ENCODE measurements at regions of chr11 and their contacts with region 1.

Region 1: DNA sequence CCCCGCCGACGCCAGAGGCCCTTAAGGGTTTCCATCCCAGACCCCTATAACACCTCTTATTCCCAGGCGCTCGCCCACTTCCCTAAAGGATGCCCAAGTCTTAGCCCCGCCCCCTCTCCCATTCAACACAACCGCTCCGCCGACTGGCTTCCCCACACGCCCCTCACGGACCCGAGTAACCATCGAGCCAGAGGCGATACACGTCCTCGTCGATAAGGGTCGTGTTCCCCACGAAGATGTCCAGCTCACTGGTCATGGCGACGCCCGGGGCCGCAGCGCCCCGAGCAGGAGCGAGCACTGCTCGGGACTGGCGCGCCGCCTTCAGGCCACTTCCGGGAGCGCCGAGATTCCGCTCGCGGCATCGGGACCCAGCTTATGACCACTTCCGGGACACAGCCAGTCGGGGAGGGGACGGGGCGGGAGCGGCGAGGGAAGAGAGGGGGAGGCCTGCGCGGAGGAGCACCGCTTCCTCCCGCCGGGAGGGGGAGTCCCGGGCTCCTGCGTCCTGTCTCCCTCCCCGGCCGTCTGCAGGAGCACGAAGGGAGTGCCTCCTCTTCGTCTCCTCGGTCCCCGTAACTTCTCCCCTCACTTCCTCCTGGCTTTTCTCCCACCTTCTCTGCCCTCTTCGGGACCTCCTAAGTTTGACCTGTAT is at the start of gene FIBP:
- DNase-seq: peak; percentile 92 to 98 (median 95)
- ATAC-seq: peak; percentile 60
- H3K4me3 ChIP-seq: peak within 1 kb of the TSS; percentile 93
- H3K4me3 Mint-ChIP-seq: peak within 1 kb of the TSS; percentile 87
- H3K27ac ChIP-seq: peak within 1 kb of the TSS; percentile 88 to 91
- H3K27ac Mint-ChIP-seq: peak within 1 kb of the TSS; percentile 95
- H3K4me1 ChIP-seq: peaks cover 68% of the 10 kb centered on the region
- H3K4me1 Mint-ChIP-seq: peaks cover 63% of the 10 kb centered on the region
- H3K27me3 ChIP-seq: no peaks in the 10 kb centered on the region
- H3K27me3 Mint-ChIP-seq: no peaks in the 10 kb centered on the region
- CTCF ChIP-seq: peak; percentile 95
- total RNA-seq, gene FIBP: 19.1 to 19.9 TPM

Region 2: DNA sequence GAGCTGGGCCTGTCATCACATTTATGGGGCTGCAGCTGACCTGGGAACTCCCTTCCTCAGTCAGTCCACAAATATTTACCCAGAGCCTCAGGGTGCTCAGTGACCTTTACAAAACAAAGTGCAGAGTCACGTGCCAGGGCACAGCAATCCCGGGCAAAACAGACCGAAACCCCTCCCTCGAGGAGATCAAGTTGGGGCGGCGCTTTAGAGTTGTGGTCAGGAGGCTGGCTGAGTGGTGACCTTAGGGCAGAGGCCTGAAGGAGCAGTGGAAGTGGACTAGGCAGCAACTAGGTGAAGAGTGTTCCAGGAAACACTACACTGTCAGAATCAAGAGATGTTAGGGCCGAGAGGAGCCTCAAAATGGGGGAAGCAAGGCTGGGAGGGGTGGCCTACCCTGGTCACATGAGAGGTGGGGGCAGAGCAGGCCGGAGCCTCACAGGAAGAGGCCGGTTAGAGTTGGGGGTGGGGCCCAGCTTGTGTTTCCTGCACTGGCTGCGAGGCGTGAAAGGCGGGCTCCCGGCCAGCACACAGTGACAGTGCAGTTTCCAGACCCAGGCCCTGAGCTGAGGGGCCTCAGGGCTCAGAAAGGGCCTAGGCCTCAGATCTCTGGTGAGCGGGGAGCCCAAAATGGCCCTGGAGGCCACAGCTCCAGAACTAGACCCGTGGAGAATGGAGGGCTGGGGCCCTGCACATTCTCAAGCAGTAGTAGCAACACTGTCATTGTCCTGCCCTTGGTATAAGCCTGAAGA is 469.4 kb before region 1 on chr11:
- CTCF ChIA-PET with region 1: no interaction called
- POLR2A ChIA-PET with region 1: interaction called, 10 read pairs
- intact Hi-C with region 1: no loop called
- DNase-seq: peak in 12 of 14 experiments; percentile 56 to 94 (median 75)
- ATAC-seq: peak; percentile 2
- H3K4me3 ChIP-seq: peak overlapping the region; percentile 86
- H3K4me3 Mint-ChIP-seq: peak overlapping the region; percentile 92
- H3K27ac ChIP-seq: peak overlapping the region; percentile 99
- H3K27ac Mint-ChIP-seq: peak overlapping the region; percentile 96
- H3K4me1 ChIP-seq: peaks cover 74% of the 10 kb centered on the region
- H3K4me1 Mint-ChIP-seq: peaks cover 57% of the 10 kb centered on the region
- H3K27me3 ChIP-seq: no peaks in the 10 kb centered on the region
- H3K27me3 Mint-ChIP-seq: no peaks in the 10 kb centered on the region
- CTCF ChIP-seq: no peak

Region 3: GRCh38 chr11:65471410-65471762 is 416.9 kb before region 1 on chr11:
- CTCF ChIA-PET with region 1: no interaction called
- POLR2A ChIA-PET with region 1: no interaction called
- intact Hi-C with region 1: no loop called
- DNase-seq: peak in 5 of 14 experiments; percentile 15 to 64 (median 32)
- ATAC-seq: no peak
- H3K4me3 ChIP-seq: peak overlapping the region; percentile 3
- H3K4me3 Mint-ChIP-seq: no peak overlapping the region
- H3K27ac ChIP-seq: peak overlapping the region; percentile 72 to 76
- H3K27ac Mint-ChIP-seq: peak overlapping the region; percentile 92
- H3K4me1 ChIP-seq: peaks cover 26% of the 10 kb centered on the region
- H3K4me1 Mint-ChIP-seq: peaks cover 16% of the 10 kb centered on the region
- H3K27me3 ChIP-seq: no peaks in the 10 kb centered on the region
- H3K27me3 Mint-ChIP-seq: no peaks in the 10 kb centered on the region
- CTCF ChIP-seq: no peak

Region 4: DNA sequence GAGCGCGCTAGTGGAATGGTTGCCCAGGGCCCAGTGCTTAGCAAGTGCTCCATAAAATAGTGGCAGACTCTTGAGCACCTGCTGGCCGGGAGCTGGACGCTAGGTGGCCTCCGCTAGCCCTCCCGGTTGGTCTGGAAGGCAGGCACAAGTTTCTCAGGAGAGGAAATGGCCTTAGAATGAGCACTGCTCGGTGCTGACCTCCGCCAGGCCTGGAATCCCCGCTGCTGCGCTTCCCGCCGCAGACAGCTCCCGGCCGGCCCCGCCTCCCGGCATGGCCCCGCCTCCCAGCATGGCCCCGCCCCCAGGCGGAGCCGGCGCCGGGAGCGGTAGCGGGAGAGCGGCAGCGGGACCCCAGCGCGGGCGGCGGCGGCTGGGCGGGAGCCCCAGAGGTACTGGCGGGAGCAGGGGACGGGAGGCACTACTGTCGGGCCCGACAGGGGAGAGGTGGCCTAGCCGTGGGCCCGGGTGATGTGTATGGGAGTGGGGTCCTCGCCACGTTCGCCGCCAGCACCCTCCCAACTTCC is 250.4 kb before region 1 on chr11 and contains the start of gene SIPA1:
- CTCF ChIA-PET with region 1: no interaction called
- POLR2A ChIA-PET with region 1: no interaction called
- intact Hi-C with region 1: no loop called
- DNase-seq: peak; percentile 50 to 90 (median 68)
- ATAC-seq: peak; percentile 43
- H3K4me3 ChIP-seq: peak within 1 kb of the TSS; percentile 100
- H3K4me3 Mint-ChIP-seq: peak within 1 kb of the TSS; percentile 97
- H3K27ac ChIP-seq: peak within 1 kb of the TSS; percentile 92 to 95
- H3K27ac Mint-ChIP-seq: peak within 1 kb of the TSS; percentile 100
- H3K4me1 ChIP-seq: peaks cover 74% of the 10 kb centered on the region
- H3K4me1 Mint-ChIP-seq: peaks cover 60% of the 10 kb centered on the region
- H3K27me3 ChIP-seq: no peaks in the 10 kb centered on the region
- H3K27me3 Mint-ChIP-seq: no peaks in the 10 kb centered on the region
- CTCF ChIP-seq: no peak
- total RNA-seq, gene SIPA1: 272 to 298 TPM

Region 5: GRCh38 chr11:65779851-65780577 is 108.3 kb before region 1 on chr11:
- CTCF ChIA-PET with region 1: interaction called, 18 read pairs
- POLR2A ChIA-PET with region 1: interaction called, 17 read pairs
- intact Hi-C with region 1: no loop called
- DNase-seq: peak; percentile 57 to 89 (median 72)
- ATAC-seq: peak; percentile 73
- H3K4me3 ChIP-seq: peak overlapping the region; percentile 92
- H3K4me3 Mint-ChIP-seq: peak overlapping the region; percentile 88
- H3K27ac ChIP-seq: peak overlapping the region in 1 of 2 donors; percentile 17
- H3K27ac Mint-ChIP-seq: peak overlapping the region; percentile 56
- H3K4me1 ChIP-seq: peaks cover 46% of the 10 kb centered on the region
- H3K4me1 Mint-ChIP-seq: peaks cover 17% of the 10 kb centered on the region
- H3K27me3 ChIP-seq: no peaks in the 10 kb centered on the region
- H3K27me3 Mint-ChIP-seq: peaks cover 12% of the 10 kb centered on the region
- CTCF ChIP-seq: peak; percentile 93

Region 6: DNA sequence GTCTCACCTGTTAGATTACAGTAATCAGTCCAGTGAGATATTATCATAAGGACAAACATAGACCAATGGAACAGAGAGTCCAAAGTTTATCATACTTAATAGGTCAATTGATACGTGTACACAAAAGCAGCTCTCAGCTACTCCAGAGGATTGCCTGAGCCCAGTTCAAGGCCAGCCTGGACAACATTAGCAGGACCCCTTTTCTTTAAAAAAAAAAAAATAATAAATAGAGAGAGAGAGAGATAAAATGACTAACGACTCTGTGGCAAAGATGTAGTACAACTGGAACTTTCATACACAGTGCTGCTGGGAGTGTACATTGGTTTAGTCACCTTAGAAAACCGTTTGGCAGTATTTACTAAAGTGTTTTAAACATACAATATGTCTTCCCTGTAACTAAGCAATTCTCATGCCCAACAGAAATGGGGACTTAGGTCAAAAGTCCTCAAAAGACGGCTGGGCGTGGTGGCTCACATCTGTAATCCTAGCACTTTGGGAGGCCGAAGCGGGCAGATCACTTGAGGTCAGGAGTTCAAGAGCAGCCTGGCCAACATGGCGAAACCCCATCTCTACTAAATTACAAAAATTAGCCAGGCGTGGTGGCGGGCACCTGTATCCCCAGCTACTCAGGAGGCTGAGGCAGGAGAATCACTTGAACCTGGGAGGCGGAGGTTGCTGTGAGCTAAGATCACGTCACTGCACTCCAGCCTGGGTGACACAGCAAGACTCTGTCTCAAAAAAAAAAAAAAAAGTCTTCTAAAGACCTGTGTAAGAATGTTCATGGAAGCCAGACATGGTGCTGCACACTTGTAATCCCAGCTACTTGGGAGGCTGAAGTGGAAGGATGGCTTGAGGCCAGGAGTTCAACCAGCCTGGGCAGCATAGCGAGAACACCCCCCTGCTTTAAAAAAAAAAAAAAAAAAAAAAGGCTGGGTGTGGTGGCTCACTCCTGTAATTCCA is 43.8 kb before region 1 on chr11:
- CTCF ChIA-PET with region 1: no interaction called
- POLR2A ChIA-PET with region 1: no interaction called
- intact Hi-C with region 1: no loop called
- DNase-seq: no peak
- ATAC-seq: no peak
- H3K4me3 ChIP-seq: no peak overlapping the region
- H3K4me3 Mint-ChIP-seq: no peak overlapping the region
- H3K27ac ChIP-seq: no peak overlapping the region
- H3K27ac Mint-ChIP-seq: no peak overlapping the region
- H3K4me1 ChIP-seq: no peaks in the 10 kb centered on the region
- H3K4me1 Mint-ChIP-seq: no peaks in the 10 kb centered on the region
- H3K27me3 ChIP-seq: no peaks in the 10 kb centered on the region
- H3K27me3 Mint-ChIP-seq: no peaks in the 10 kb centered on the region
- CTCF ChIP-seq: no peak

Region 7: GRCh38 chr11:65900125-65900898 is 12.0 kb after region 1 on chr11 and contains the start of gene FOSL1:
- CTCF ChIA-PET with region 1: interaction called, 37 read pairs
- POLR2A ChIA-PET with region 1: interaction called, 80 read pairs
- intact Hi-C with region 1: loop called (anchors 1 kb)
- DNase-seq: peak; percentile 81 to 98 (median 90)
- ATAC-seq: peak; percentile 94
- H3K4me3 ChIP-seq: peak within 1 kb of the TSS; percentile 43
- H3K4me3 Mint-ChIP-seq: peak within 1 kb of the TSS; percentile 72
- H3K27ac ChIP-seq: no peak within 1 kb of the TSS
- H3K27ac Mint-ChIP-seq: peak within 1 kb of the TSS; percentile 79
- H3K4me1 ChIP-seq: peaks cover 27% of the 10 kb centered on the region
- H3K4me1 Mint-ChIP-seq: peaks cover 5% of the 10 kb centered on the region
- H3K27me3 ChIP-seq: peaks cover 9 to 12% of the 10 kb centered on the region in 2 experiments
- H3K27me3 Mint-ChIP-seq: peaks cover 18% of the 10 kb centered on the region
- CTCF ChIP-seq: no peak
- total RNA-seq, gene FOSL1: 1.8 to 2.2 TPM

Region 8: DNA sequence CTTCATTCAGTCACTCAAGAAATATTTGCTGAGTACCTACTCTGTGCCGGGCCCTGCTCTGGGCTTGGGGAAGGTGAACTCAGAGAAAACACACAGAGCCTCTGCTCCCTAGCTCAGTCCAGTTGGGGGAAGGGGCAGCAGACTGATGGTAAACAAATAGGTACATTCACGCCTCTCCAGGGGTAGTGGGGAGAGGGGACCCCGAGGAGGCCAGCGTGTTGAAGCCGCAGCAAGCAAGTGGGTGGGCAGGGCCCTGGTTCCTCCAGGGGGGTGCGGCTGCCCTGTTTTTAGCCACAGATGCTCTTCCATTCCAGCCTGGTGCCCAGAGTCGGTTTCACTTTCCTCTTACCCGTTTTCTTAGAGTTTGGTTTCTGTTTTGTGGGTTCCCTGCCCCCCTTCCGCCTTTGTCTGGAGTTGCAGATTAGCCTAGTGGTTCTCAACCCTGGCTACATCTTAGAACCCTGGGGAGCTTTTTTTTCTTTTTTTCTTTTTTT is 39.7 kb after region 1 on chr11:
- CTCF ChIA-PET with region 1: interaction called, 16 read pairs
- POLR2A ChIA-PET with region 1: interaction called, 104 read pairs
- intact Hi-C with region 1: loop called in 1 of 2 experiments (anchors 1 kb)
- DNase-seq: peak; percentile 59 to 93 (median 76)
- ATAC-seq: peak; percentile 96
- H3K4me3 ChIP-seq: peak overlapping the region; percentile 39
- H3K4me3 Mint-ChIP-seq: peak overlapping the region; percentile 77
- H3K27ac ChIP-seq: peak overlapping the region; percentile 78 to 81
- H3K27ac Mint-ChIP-seq: peak overlapping the region; percentile 95
- H3K4me1 ChIP-seq: peaks cover 26% of the 10 kb centered on the region
- H3K4me1 Mint-ChIP-seq: peaks cover 30% of the 10 kb centered on the region
- H3K27me3 ChIP-seq: no peaks in the 10 kb centered on the region
- H3K27me3 Mint-ChIP-seq: no peaks in the 10 kb centered on the region
- CTCF ChIP-seq: no peak

Region 9: DNA sequence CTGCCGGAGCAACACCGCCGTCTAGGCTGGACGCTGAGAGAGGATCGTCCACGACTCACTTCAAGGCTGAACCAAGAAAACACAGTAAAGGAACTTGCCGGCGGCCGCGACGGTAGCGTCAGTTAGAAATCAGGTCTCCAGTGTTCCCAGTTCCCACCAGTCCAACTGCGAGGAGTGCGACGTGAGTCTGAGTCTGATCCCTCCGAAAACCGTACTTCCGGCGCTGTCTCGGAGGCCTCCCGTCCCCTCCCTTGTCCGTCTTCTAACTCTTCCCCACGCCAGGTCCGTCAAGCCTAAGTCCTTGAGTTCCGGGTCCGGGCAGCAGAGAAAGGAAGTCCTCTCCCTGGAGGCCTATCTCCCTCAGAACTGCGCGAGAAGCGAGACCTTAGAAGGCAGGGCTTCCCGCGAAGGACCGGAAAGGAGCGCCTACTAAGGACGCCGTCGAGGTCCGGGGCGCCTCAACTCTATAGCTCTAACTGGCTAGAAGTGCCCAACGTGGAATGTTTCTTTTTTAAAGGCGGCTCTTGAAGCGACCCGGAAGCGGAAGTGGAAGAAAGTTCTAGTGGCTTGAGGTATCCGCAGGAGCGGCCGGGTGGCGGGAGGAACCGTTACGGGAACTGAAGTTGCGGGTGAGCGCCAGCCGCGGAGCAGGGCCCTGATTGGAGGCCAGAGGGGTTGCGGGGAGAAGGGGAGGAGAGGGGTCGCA is 113.8 kb after region 1 on chr11 and contains the starts of genes BANF1 and EIF1AD:
- CTCF ChIA-PET with region 1: interaction called, 5 read pairs
- POLR2A ChIA-PET with region 1: interaction called, 21 read pairs
- intact Hi-C with region 1: loop called in 1 of 2 experiments (anchors 1 kb)
- DNase-seq: peak; percentile 84 to 98 (median 89)
- ATAC-seq: peak; percentile 77
- H3K4me3 ChIP-seq: peak within 1 kb of the TSS; percentile 75
- H3K4me3 Mint-ChIP-seq: peak within 1 kb of the TSS; percentile 94
- H3K27ac ChIP-seq: peak within 1 kb of the TSS; percentile 86 to 96
- H3K27ac Mint-ChIP-seq: peak within 1 kb of the TSS; percentile 97
- H3K4me1 ChIP-seq: peaks cover 39% of the 10 kb centered on the region
- H3K4me1 Mint-ChIP-seq: peaks cover 54% of the 10 kb centered on the region
- H3K27me3 ChIP-seq: no peaks in the 10 kb centered on the region
- H3K27me3 Mint-ChIP-seq: no peaks in the 10 kb centered on the region
- CTCF ChIP-seq: no peak
- total RNA-seq, gene BANF1: 21.3 to 22.3 TPM
- total RNA-seq, gene EIF1AD: 88.2 to 94.1 TPM

Region 10: DNA sequence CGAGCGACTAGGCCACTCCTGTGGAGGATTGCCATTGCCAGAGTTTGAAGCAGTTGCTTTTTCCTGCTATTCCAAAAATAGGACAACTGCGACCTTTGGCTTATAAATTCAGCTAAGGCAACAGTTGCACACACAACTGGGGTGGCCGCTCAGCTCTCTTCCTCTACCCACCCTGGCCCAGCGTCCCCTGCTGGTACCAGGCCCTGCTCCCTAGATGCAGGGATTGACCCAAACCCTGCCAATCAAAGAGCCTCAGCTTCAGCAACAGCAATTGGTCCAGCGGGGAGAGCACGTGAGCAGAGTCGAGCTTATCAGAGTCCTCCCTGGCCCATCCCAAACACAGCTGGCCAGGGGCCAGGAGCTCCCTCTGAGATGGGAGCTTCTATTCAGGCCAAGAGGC is 1657.0 kb after region 1 on chr11:
- CTCF ChIA-PET with region 1: no interaction called
- POLR2A ChIA-PET with region 1: no interaction called
- intact Hi-C with region 1: no loop called
- DNase-seq: no peak
- ATAC-seq: no peak
- H3K4me3 ChIP-seq: no peak overlapping the region
- H3K4me3 Mint-ChIP-seq: no peak overlapping the region
- H3K27ac ChIP-seq: no peak overlapping the region
- H3K27ac Mint-ChIP-seq: no peak overlapping the region
- H3K4me1 ChIP-seq: no peaks in the 10 kb centered on the region
- H3K4me1 Mint-ChIP-seq: no peaks in the 10 kb centered on the region
- H3K27me3 ChIP-seq: no peaks in the 10 kb centered on the region
- H3K27me3 Mint-ChIP-seq: peaks cover 3% of the 10 kb centered on the region
- CTCF ChIP-seq: no peak